Activated naive CD4-positive, alpha-beta T cell treated with anti-CD3 and anti-CD28 coated beads for 36 hours (primary cell): ENCODE measurements at regions of chr6 and their contacts with region 1.

Region 1: GRCh38 chr6:134247231-134247833 is 70.6 kb downstream of the SGK1 start:
- DNase-seq: peak; percentile 94
- H3K4me3 Mint-ChIP-seq: peak overlapping the region; percentile 27
- H3K27ac Mint-ChIP-seq: peak overlapping the region; percentile 97
- H3K4me1 Mint-ChIP-seq: peaks cover 58% of the 10 kb centered on the region
- H3K27me3 Mint-ChIP-seq: no peaks in the 10 kb centered on the region

Region 2: DNA sequence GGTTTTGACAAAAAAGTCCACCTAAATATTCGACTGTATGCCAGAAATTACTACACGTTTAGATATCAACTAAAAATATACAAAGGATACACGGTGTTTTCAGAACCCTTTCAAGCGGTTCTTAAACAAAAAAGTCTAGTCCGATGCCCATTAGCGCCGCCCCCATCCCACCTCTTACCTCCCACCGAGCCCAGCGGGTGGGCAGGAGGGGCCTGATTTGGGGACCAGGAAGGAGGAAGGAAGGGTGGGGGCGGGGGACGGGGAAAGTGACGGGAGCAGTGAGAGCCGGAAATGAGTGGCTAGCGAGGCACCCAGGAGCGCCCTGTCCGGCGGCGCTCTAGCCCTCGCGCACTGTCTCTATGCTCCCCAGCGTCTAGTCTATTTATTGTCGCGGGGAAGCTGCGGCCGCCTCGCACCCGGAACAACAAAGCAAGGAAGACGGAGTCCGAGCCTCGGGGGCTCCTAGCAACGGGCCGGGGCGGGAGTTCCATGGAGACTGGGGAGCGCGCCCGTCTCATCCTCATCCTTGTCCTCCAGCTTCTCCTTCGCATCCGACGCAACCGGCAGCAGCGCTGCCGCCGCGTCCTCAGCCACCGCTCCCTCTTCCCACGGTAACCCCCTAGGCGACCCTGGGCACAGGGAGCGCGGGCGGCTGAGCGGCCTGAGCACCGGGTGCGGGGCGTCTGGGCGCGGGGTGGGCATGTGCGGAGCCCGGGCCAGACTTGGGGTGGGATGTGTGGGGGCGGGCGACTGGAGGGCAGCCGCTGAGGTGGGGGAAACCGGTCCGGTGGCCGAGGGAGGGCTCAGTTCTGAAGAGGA is 294.3 kb before region 1 on chr6 and contains the start of gene TBPL1:
- CTCF ChIA-PET with region 1: no interaction called
- intact Hi-C with region 1: loop called (anchors 5 kb)
- DNase-seq: peak; percentile 92
- H3K4me3 Mint-ChIP-seq: peak within 1 kb of the TSS; percentile 87
- H3K27ac Mint-ChIP-seq: peak within 1 kb of the TSS; percentile 86
- H3K4me1 Mint-ChIP-seq: peaks cover 36% of the 10 kb centered on the region
- H3K27me3 Mint-ChIP-seq: no peaks in the 10 kb centered on the region
- total RNA-seq, gene TBPL1: 27.0 to 27.6 TPM

Region 3: DNA sequence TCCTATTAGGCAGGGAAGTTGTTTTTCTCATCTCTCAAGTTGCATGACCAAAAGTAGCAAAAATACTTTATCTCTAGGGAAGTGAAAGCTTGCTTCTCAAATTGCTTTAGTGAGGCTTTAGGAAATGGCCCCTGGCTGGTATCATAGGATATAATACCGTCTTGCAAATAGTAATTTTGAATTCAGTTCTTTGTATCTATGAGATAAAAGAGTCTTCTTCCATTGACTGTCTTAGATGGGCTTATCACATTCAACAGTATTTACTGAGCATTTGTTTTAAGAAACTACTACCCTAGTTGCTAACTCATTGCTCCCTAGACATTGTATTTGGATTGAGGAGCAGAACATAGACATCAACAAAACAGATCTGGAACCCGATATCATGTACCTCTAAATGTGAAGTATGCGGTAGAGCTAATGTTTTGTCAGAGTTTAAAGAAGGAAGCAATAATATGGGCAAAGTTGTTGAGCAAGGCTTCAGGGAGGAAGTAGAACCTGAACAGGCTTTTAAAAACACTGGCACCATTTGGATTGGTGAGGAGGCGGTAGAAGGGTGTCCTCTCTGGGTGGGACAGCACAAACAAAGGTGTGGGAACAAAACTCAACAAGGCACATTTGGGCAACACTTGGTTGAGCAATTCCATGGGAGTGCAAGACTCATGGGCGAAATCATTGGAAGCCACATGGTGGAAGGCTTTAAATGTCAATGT is 30.9 kb before region 1 on chr6:
- CTCF ChIA-PET with region 1: no interaction called
- intact Hi-C with region 1: no loop called
- DNase-seq: no peak
- H3K4me3 Mint-ChIP-seq: no peak overlapping the region
- H3K27ac Mint-ChIP-seq: no peak overlapping the region
- H3K4me1 Mint-ChIP-seq: peaks cover 13% of the 10 kb centered on the region
- H3K27me3 Mint-ChIP-seq: no peaks in the 10 kb centered on the region

Region 4: DNA sequence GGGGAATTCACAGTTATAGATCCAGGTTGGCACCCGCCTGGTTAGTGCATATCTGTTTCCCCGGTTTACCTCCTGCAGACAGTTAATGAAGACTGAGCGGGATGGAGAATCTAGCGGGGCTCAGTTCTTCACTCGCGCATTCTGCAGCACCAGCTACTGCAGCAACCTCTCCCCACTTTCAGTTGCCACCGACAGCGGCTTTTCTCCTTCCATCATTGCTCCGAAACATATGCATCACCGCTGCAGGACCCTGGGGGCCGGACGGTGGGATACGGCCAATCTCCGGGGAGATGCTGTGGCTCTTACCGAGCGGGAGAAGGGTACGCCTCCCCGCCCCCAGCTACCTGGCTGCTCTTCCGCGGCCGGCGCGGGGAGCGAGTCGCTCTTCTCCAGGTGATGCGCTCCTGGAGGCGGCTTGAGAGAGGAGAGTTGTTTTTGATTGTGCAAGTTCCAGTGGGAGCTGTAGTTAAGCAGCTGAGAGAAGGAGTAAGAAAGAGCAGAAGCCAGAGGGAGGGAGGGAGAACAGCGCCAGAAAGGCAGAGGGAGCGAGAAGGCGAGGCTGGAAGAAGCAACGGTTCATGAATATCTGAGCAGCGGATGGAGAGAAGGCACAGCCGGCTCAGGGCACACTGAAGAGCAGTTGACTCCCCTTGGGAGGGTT is 70.3 kb after region 1 on chr6 and contains the start of gene SGK1:
- CTCF ChIA-PET with region 1: interaction called, 4 read pairs
- intact Hi-C with region 1: loop called (anchors 1 kb)
- DNase-seq: peak; percentile 43
- H3K4me3 Mint-ChIP-seq: peak within 1 kb of the TSS; percentile 85
- H3K27ac Mint-ChIP-seq: peak within 1 kb of the TSS; percentile 14
- H3K4me1 Mint-ChIP-seq: peaks cover 36% of the 10 kb centered on the region
- H3K27me3 Mint-ChIP-seq: peaks cover 21% of the 10 kb centered on the region
- total RNA-seq, gene SGK1: 202 to 208 TPM

Region 5: DNA sequence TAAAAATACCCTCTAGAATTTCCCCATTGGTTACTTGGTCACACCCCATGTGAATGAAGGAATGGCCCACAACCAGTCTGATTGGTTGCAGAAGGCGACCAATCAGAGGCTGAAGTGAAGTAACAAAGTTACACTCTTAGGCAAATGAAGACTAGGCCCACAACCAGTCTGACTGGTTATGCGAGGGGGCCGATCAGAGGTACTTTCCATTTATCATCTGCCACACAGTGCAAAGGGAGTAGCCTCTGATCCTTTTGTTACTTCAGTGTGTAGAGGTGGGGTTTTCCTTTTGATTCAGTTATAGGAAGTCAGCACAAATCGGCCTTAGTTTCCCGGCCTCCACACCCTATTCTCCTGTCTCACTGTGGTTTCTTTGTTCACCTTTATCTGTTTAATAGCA is 131.8 kb after region 1 on chr6:
- CTCF ChIA-PET with region 1: no interaction called
- intact Hi-C with region 1: loop called (anchors 1 kb)
- DNase-seq: peak; percentile 87
- H3K4me3 Mint-ChIP-seq: peak overlapping the region; percentile 35
- H3K27ac Mint-ChIP-seq: peak overlapping the region; percentile 84
- H3K4me1 Mint-ChIP-seq: peaks cover 40% of the 10 kb centered on the region
- H3K27me3 Mint-ChIP-seq: no peaks in the 10 kb centered on the region

Region 6: DNA sequence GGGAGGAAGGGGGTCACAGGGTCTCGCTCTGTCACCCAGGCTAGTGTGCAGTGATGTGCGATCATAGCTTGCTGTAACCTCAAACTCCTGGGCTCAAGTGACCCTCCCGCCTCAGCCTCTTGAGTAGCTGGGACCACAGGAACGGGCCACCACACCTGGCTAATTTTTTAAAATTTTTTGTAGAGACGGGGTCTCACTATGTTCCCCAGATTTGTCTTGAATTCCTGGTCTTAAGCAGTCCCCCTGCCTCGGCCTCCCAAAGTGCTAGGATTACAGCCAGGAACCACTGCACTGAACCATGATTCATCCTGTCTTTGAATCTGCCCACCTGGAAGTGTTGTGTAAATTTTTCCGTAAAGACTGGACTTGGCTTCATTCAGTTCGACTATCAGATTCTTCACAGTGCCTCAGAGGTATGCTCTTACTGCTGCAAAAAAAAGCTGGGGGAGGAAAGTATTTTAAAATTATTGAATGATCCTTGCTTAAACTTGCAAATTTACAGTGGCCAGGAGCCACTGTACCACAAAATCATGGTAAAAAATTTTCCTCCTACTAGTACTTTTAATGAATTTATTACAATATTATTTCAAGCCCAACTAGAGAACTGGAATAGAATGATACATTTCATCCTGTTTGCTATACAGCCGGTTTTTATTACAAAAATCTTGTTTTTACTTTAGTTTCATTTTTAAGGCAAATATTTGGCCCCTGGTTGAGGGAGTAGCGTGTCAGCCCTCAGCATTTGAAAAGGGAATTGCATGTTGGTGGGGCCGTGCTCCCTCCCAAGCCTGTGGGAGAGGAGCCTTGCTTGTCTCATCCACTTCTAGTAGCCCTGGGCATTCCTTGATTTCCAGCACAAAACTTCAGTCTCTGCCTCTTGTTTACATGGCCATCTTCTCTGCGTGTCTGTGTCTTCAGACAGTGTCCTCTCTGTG is 273.1 kb after region 1 on chr6:
- CTCF ChIA-PET with region 1: no interaction called
- intact Hi-C with region 1: loop called (anchors 1 kb)
- DNase-seq: no peak
- H3K4me3 Mint-ChIP-seq: no peak overlapping the region
- H3K27ac Mint-ChIP-seq: peak overlapping the region; percentile 56
- H3K4me1 Mint-ChIP-seq: peaks cover 57% of the 10 kb centered on the region
- H3K27me3 Mint-ChIP-seq: no peaks in the 10 kb centered on the region

Region 7: GRCh38 chr6:135054569-135055498 is 807.5 kb after region 1 on chr6 and contains the start of gene HBS1L:
- CTCF ChIA-PET with region 1: no interaction called
- intact Hi-C with region 1: loop called (anchors 5 kb)
- DNase-seq: peak; percentile 98
- H3K4me3 Mint-ChIP-seq: peak within 1 kb of the TSS; percentile 90
- H3K27ac Mint-ChIP-seq: peak within 1 kb of the TSS; percentile 96
- H3K4me1 Mint-ChIP-seq: peaks cover 23% of the 10 kb centered on the region
- H3K27me3 Mint-ChIP-seq: no peaks in the 10 kb centered on the region
- total RNA-seq, gene HBS1L: 150 to 153 TPM

Region 8: GRCh38 chr6:135128268-135128914 is 881.1 kb after region 1 on chr6:
- CTCF ChIA-PET with region 1: no interaction called
- intact Hi-C with region 1: loop called (anchors 5 kb)
- DNase-seq: peak; percentile 83
- H3K4me3 Mint-ChIP-seq: peak overlapping the region; percentile 26
- H3K27ac Mint-ChIP-seq: peak overlapping the region; percentile 74
- H3K4me1 Mint-ChIP-seq: peaks cover 43% of the 10 kb centered on the region
- H3K27me3 Mint-ChIP-seq: no peaks in the 10 kb centered on the region